Activated CD4-positive, alpha-beta T cell treated with anti-CD3 and anti-CD28 coated beads, Interleukin-2, amount 10 ng/mL, durations not matched to agents 24 days and 14 days (primary cell): ENCODE measurements at regions of chr1 and their contacts with region 1.

Region 1: GRCh38 chr1:234478481-234479309 is at the start of gene TARBP1:
- DNase-seq: peak; percentile 94
- H3K4me3 Mint-ChIP-seq: peak within 1 kb of the TSS; percentile 87
- H3K27ac Mint-ChIP-seq: peak within 1 kb of the TSS; percentile 85
- H3K4me1 Mint-ChIP-seq: peaks cover 34% of the 10 kb centered on the region
- H3K27me3 Mint-ChIP-seq: peaks cover 12% of the 10 kb centered on the region
- total RNA-seq, gene TARBP1: 70.7 and 75.9 TPM in 2 replicates

Region 2: DNA sequence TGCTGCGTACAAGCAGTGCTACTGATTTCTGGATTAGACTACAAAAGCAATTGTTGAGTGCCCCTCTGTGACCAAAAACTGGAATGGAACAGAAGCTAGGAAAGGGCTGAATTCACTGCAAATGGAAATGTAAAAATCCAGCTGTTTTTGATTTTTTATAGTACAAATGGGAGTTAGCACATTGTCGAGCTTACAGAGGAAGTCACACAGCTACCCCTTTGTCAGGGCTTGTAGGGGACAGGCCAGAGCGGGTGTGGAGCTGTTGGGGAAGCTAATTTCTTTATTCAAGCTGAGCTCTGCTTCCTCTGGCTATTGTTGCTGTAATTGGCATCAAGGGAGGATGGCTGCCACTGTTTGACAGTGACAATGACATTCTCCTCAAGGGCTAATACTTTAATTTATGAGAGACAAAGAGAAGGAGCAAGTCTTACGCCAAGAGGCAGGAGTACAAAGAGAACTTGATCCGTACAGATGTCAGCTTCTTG is 478.1 kb before region 1 on chr1:
- intact Hi-C with region 1: no loop called
- DNase-seq: no peak
- H3K4me3 Mint-ChIP-seq: no peak overlapping the region
- H3K27ac Mint-ChIP-seq: no peak overlapping the region
- H3K4me1 Mint-ChIP-seq: no peaks in the 10 kb centered on the region
- H3K27me3 Mint-ChIP-seq: peaks cover 2% of the 10 kb centered on the region

Region 3: GRCh38 chr1:234114648-234115307 is 363.9 kb before region 1 on chr1:
- intact Hi-C with region 1: loop called (anchors 10 kb)
- DNase-seq: peak; percentile 76
- H3K4me3 Mint-ChIP-seq: peak overlapping the region; percentile 57
- H3K27ac Mint-ChIP-seq: no peak overlapping the region
- H3K4me1 Mint-ChIP-seq: peaks cover 7% of the 10 kb centered on the region
- H3K27me3 Mint-ChIP-seq: peaks cover 32% of the 10 kb centered on the region

Region 4: GRCh38 chr1:234355782-234356510 is 122.7 kb before region 1 on chr1:
- intact Hi-C with region 1: no loop called
- DNase-seq: no peak
- H3K4me3 Mint-ChIP-seq: peak overlapping the region; percentile 90
- H3K27ac Mint-ChIP-seq: peak overlapping the region; percentile 90
- H3K4me1 Mint-ChIP-seq: peaks cover 16% of the 10 kb centered on the region
- H3K27me3 Mint-ChIP-seq: peaks cover 25% of the 10 kb centered on the region